ENCODE measurements at regions of chr1 and their contacts with region 1.

Region 1: DNA sequence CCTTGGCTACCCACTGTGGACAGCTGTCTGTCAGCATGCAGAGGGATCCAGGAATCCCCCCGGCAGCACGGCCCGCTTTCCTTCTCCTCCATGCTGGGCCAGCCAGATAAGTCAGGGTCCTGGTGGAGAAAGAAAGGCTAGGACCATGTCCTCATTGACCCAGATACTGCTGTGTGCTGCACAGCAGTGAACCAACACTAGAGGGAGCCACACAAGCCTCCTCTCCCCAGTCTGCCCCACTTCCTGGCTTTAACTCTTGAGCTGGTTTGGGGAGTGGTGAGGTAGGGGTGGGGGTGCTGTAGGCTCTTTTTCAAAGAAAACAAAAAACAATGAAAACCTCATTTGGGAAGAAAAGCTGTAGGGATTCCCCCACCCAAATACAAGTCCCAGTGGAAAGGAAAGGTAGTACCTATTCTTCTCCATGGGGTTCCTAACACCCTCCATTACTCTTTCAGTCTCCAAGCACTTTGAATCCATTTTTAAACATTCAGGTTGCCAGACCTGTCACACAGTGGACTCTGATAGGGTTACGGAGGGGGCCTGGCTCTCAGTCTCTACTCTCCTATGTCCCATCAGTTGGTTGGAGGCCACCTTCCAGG is 84.9 kb upstream of the CD1D start:
- DNase-seq: peak in 4 of 9 experiments; percentile 10 to 52 (median 33)
- ATAC-seq: peak; percentile 55
- H3K4me3 ChIP-seq: no peak overlapping the region
- H3K4me3 Mint-ChIP-seq: no peak overlapping the region
- H3K27ac ChIP-seq: no peak overlapping the region
- H3K27ac Mint-ChIP-seq: no peak overlapping the region
- H3K4me1 ChIP-seq: no peaks in the 10 kb centered on the region
- H3K4me1 Mint-ChIP-seq: no peaks in the 10 kb centered on the region
- H3K27me3 ChIP-seq: no peaks in the 10 kb centered on the region
- H3K27me3 Mint-ChIP-seq: no peaks in the 10 kb centered on the region
- CTCF ChIP-seq: peak; percentile 22

Region 2: DNA sequence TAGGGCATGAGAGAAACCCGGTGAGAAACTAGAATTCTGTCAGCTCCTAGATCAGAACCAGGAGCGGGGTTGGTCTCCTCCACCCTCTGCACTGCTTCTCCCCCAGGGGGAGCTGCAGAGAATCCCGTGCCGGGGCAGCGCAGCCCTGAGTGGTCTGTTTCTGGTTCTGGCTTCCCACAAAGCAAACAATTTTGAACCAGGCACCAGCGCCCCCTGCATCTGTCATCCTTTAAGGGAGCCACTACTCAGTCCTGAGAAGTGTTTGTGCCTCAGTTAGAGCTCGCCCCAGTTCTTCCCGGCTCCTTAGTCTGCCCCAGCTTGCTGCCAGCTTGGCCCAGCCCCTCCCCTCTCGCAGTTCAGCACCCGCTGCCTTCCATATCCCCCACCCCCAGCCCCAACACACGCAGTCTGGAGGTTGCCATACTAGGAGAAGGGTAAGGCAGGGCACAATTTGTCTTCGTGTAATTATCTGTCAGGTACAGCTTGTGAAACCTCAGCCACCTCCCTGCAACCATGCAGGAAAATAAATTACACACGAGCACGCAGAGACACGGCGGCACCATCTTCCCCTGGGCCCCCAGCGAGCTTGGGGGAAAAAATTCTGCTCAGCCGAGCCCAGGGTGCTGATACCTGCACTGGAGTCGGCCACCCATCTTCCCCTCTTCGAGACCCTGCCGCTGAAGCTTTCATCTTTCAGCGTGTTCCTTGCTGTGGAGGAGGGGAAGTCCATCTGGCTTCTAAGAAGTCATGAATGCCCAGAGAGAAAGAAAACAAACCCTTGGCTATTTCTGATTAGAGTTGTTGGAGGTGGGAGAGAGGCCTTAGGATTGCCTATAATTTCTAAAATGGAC is 22.2 kb after region 1 on chr1:
- CTCF ChIA-PET with region 1: interaction called, 59 read pairs
- POLR2A ChIA-PET with region 1: no interaction called
- intact Hi-C with region 1: loop called (anchors 1 to 2 kb)
- DNase-seq: peak in 8 of 9 experiments; percentile 19 to 66 (median 56)
- ATAC-seq: peak; percentile 77
- H3K4me3 ChIP-seq: peak overlapping the region in 1 of 2 experiments; percentile 22
- H3K4me3 Mint-ChIP-seq: peak overlapping the region; percentile 54
- H3K27ac ChIP-seq: no peak overlapping the region
- H3K27ac Mint-ChIP-seq: no peak overlapping the region
- H3K4me1 ChIP-seq: peaks cover 5% of the 10 kb centered on the region
- H3K4me1 Mint-ChIP-seq: peaks cover 19% of the 10 kb centered on the region
- H3K27me3 ChIP-seq: peaks cover 12% of the 10 kb centered on the region in 2 experiments
- H3K27me3 Mint-ChIP-seq: peaks cover 60% of the 10 kb centered on the region
- CTCF ChIP-seq: peak; percentile 53

Region 3: GRCh38 chr1:159436469-159436868 is 1340.6 kb after region 1 on chr1:
- CTCF ChIA-PET with region 1: no interaction called
- POLR2A ChIA-PET with region 1: no interaction called
- intact Hi-C with region 1: no loop called
- DNase-seq: no peak
- ATAC-seq: no peak
- H3K4me3 ChIP-seq: no peak overlapping the region
- H3K4me3 Mint-ChIP-seq: no peak overlapping the region
- H3K27ac ChIP-seq: no peak overlapping the region
- H3K27ac Mint-ChIP-seq: no peak overlapping the region
- H3K4me1 ChIP-seq: no peaks in the 10 kb centered on the region
- H3K4me1 Mint-ChIP-seq: no peaks in the 10 kb centered on the region
- H3K27me3 ChIP-seq: peaks cover 0 to 3% of the 10 kb centered on the region in 2 experiments
- H3K27me3 Mint-ChIP-seq: peaks cover 18% of the 10 kb centered on the region
- CTCF ChIP-seq: no peak